Activated naive CD4-positive, alpha-beta T cell treated with anti-CD3 and anti-CD28 coated beads for 36 hours (primary cell): ENCODE measurements at regions of chr1 and their contacts with region 1.

Region 1: GRCh38 chr1:110780600-110781484 is 92.1 kb upstream of the CD53 start:
- DNase-seq: peak; percentile 89
- H3K4me3 Mint-ChIP-seq: peak overlapping the region; percentile 27
- H3K27ac Mint-ChIP-seq: no peak overlapping the region
- H3K4me1 Mint-ChIP-seq: peaks cover 24% of the 10 kb centered on the region
- H3K27me3 Mint-ChIP-seq: no peaks in the 10 kb centered on the region

Region 2: GRCh38 chr1:110495926-110496600 is 284.8 kb before region 1 on chr1:
- CTCF ChIA-PET with region 1: interaction called, 15 read pairs
- intact Hi-C with region 1: no loop called
- DNase-seq: peak; percentile 91
- H3K4me3 Mint-ChIP-seq: no peak overlapping the region
- H3K27ac Mint-ChIP-seq: peak overlapping the region; percentile 1
- H3K4me1 Mint-ChIP-seq: no peaks in the 10 kb centered on the region
- H3K27me3 Mint-ChIP-seq: no peaks in the 10 kb centered on the region

Region 3: GRCh38 chr1:110554871-110555801 is 225.7 kb before region 1 on chr1:
- CTCF ChIA-PET with region 1: interaction called, 16 read pairs
- intact Hi-C with region 1: loop called (anchors 1 kb)
- DNase-seq: peak; percentile 55
- H3K4me3 Mint-ChIP-seq: peak overlapping the region; percentile 22
- H3K27ac Mint-ChIP-seq: no peak overlapping the region
- H3K4me1 Mint-ChIP-seq: peaks cover 3% of the 10 kb centered on the region
- H3K27me3 Mint-ChIP-seq: peaks cover 41% of the 10 kb centered on the region

Region 4: DNA sequence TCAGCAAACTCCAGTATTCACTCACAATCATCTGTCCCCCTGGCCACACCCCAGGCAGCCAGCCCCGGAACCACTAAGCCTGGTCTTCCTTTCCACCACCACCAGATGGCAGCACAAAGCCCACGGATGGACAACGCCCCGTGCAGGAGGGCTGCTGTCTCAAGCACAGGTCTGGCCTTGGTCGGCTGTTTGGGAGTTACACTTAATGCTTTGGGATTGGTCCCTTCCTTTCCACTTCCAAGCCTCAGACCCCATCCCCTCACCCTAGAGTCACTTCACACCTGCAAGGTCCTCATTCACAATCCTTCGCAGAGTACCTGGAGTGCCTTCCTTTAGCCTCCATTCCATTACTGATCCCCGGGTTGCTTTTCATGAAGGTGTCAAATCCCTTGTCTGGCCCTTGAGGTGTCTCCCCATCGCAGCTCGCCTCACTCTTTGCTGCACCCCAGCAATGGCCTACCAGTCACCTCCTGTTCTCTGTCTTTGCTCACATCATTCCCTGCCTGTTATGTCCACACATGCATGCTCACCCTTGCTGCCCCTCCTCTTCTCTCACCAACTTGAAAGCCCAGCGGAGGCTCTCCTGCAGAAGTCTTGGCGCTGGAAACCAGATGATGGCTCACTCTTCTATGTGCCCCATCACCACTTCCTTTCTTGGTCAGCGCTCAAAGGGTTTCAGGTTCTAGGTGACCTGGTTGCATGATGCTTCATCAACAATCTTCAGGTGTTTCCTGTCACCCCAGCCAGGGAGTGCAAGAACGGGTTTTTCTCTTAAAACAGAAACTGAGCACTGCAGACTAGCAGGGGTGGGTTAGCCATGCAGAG is 149.8 kb before region 1 on chr1:
- CTCF ChIA-PET with region 1: interaction called, 25 read pairs
- intact Hi-C with region 1: loop called (anchors 1 kb)
- DNase-seq: peak; percentile 92
- H3K4me3 Mint-ChIP-seq: no peak overlapping the region
- H3K27ac Mint-ChIP-seq: no peak overlapping the region
- H3K4me1 Mint-ChIP-seq: peaks cover 54% of the 10 kb centered on the region
- H3K27me3 Mint-ChIP-seq: no peaks in the 10 kb centered on the region

Region 5: DNA sequence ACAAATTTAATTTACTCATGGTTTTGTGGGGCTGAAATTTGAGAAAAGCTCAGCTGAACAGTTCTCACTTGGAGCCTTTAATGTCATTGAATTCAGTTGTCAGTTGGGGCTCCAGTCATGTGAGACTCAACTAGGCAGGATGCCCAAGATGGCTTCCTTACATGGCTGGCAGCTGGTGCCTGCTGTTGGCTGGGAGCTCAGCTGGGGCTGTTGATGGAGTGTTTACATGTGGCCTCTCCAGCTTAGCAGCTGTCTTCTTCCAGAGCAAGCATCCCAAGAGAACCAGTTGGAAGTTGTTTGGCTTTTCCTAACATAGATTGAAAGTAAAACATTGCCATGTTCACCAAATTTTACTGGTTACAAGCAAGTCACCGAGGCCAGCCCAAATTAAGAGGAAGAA is 24.3 kb before region 1 on chr1:
- CTCF ChIA-PET with region 1: interaction called, 10 read pairs
- intact Hi-C with region 1: no loop called
- DNase-seq: no peak
- H3K4me3 Mint-ChIP-seq: no peak overlapping the region
- H3K27ac Mint-ChIP-seq: no peak overlapping the region
- H3K4me1 Mint-ChIP-seq: no peaks in the 10 kb centered on the region
- H3K27me3 Mint-ChIP-seq: no peaks in the 10 kb centered on the region

Region 6: DNA sequence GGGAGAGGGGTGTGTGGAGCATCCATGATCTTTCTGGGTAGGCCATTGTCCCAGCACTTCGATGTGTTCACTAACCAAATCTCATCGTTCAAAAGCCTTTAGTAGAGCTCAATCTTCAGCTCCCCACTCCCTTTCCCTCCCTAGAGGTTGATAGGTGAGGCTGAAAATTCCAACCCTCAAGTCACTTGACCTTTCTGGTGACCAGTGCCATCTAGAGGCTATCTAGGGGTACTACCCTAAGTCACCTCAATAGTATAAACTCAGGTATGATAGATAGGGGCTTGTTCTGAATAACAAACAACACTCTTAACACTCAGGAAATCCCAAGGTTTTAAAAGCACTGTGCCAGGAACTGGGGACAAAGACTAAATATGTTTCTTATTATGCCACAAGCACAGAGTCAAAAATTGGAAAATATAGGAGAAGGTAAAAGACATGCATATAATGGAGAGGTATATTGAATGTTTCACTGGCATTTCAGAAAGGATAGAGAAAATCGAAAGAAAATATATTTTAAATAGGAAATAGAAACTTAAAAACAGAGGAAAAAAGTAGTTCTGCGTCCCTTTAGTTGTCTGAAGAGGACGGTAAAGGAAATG is 49.2 kb after region 1 on chr1:
- CTCF ChIA-PET with region 1: interaction called, 23 read pairs
- intact Hi-C with region 1: loop called (anchors 1 kb)
- DNase-seq: peak; percentile 36
- H3K4me3 Mint-ChIP-seq: no peak overlapping the region
- H3K27ac Mint-ChIP-seq: no peak overlapping the region
- H3K4me1 Mint-ChIP-seq: peaks cover 8% of the 10 kb centered on the region
- H3K27me3 Mint-ChIP-seq: no peaks in the 10 kb centered on the region

Region 7: GRCh38 chr1:110914676-110915075 is 133.8 kb after region 1 on chr1:
- CTCF ChIA-PET with region 1: no interaction called
- intact Hi-C with region 1: no loop called
- DNase-seq: no peak
- H3K4me3 Mint-ChIP-seq: no peak overlapping the region
- H3K27ac Mint-ChIP-seq: no peak overlapping the region
- H3K4me1 Mint-ChIP-seq: peaks cover 14% of the 10 kb centered on the region
- H3K27me3 Mint-ChIP-seq: peaks cover 2% of the 10 kb centered on the region

Region 8: GRCh38 chr1:111030590-111030989 is 249.7 kb after region 1 on chr1:
- CTCF ChIA-PET with region 1: interaction called, 20 read pairs
- intact Hi-C with region 1: loop called (anchors 1 kb)
- DNase-seq: peak; percentile 77
- H3K4me3 Mint-ChIP-seq: no peak overlapping the region
- H3K27ac Mint-ChIP-seq: no peak overlapping the region
- H3K4me1 Mint-ChIP-seq: no peaks in the 10 kb centered on the region
- H3K27me3 Mint-ChIP-seq: peaks cover 9% of the 10 kb centered on the region

Region 9: DNA sequence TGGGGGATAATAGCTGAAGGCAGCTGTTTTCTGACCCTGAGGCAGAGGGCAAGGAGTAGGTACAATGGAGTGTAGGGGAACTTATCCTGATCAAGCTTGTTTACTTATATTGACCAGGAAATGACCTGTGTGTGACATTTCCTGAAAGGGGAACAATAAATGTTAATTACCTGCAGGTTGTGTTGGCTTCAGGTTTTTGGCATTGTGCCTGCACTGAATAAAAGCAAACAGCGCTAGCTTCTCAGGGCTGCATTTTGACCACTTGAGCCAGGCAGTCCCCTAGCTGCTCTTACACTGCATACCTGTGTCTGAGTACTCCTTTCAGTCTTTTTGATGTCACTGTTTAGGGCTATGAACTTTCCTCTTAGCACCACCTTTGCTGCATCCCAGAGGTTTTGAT is 318.4 kb after region 1 on chr1:
- CTCF ChIA-PET with region 1: no interaction called
- intact Hi-C with region 1: no loop called
- DNase-seq: no peak
- H3K4me3 Mint-ChIP-seq: no peak overlapping the region
- H3K27ac Mint-ChIP-seq: no peak overlapping the region
- H3K4me1 Mint-ChIP-seq: no peaks in the 10 kb centered on the region
- H3K27me3 Mint-ChIP-seq: no peaks in the 10 kb centered on the region